GM12878 (cell line): ENCODE measurements at regions of chr10 and their contacts with region 1.

Region 1: DNA sequence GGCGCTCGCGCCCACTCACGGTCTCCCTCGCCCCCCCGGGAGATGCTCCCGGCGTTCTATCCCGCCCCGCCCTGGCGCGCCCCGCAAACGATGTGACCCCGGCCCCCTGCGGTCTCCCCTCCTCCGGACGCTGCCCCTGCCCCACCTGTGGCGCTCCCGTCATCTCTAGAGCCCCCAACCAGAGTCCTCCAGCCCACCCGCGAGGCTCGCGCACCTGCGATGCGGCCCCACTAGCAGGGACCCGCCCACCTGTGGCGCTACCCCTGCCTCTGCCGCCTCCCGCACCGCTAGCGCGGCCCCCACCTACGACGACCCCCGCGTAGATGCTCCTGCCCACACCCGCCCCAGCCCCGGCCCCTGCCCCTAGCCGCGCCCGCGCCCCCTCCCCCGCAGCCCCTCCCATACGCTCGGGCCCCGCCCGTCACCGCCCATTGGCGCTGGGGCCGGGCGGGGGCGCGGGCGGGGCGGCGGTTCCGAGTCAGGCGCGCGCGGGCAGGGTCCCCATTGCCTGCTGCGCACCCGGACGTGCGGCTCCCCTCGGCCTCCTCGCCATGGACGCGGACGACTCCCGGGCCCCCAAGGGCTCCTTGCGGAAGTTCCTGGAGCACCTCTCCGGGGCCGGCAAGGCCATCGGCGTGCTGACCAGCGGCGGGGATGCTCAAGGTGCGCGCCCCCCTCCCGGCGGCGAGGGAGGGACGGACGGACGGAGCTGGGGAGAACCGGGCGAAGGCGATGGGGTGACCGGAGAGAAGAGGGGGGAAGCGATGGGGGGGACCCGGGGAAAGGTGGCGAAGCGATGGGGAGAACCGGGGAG is at the start of gene PFKP:
- DNase-seq: no peak
- ATAC-seq: peak; percentile 78
- H3K4me3 ChIP-seq: peak within 1 kb of the TSS; percentile 100
- H3K27ac ChIP-seq: peak within 1 kb of the TSS; percentile 85
- H3K4me1 ChIP-seq: peaks cover 6% of the 10 kb centered on the region
- H3K27me3 ChIP-seq: no peaks in the 10 kb centered on the region; a peak in 1 of 4 replicates
- CTCF ChIP-seq: no peak
- EP300 ChIP-seq: no peak
- POLR2A ChIP-seq: peak; percentile 93
- RAD21 ChIP-seq: no peak
- polyA plus RNA-seq, gene PFKP: 27.0 to 45.0 TPM

Region 2: GRCh38 chr10:3051692-3052091 is 15.6 kb before region 1 on chr10:
- CTCF ChIA-PET with region 1: interaction called, 4 read pairs
- POLR2A ChIA-PET with region 1: interaction called, 3 read pairs
- RAD21 ChIA-PET with region 1: interaction called, 3 read pairs
- SMC1A ChIA-PET with region 1: interaction called, 3 read pairs
- in situ Hi-C with region 1: no loop called
- intact Hi-C with region 1: loop called (anchors 2 kb)
- DNase-seq: no peak
- ATAC-seq: no peak
- H3K4me3 ChIP-seq: no peak overlapping the region
- H3K27ac ChIP-seq: no peak overlapping the region
- H3K4me1 ChIP-seq: no peaks in the 10 kb centered on the region
- H3K27me3 ChIP-seq: no peaks in the 10 kb centered on the region
- CTCF ChIP-seq: no peak
- EP300 ChIP-seq: no peak
- POLR2A ChIP-seq: no peak
- RAD21 ChIP-seq: no peak